ENCODE measurements at regions of chr7 and their contacts with region 1.

Region 1: DNA sequence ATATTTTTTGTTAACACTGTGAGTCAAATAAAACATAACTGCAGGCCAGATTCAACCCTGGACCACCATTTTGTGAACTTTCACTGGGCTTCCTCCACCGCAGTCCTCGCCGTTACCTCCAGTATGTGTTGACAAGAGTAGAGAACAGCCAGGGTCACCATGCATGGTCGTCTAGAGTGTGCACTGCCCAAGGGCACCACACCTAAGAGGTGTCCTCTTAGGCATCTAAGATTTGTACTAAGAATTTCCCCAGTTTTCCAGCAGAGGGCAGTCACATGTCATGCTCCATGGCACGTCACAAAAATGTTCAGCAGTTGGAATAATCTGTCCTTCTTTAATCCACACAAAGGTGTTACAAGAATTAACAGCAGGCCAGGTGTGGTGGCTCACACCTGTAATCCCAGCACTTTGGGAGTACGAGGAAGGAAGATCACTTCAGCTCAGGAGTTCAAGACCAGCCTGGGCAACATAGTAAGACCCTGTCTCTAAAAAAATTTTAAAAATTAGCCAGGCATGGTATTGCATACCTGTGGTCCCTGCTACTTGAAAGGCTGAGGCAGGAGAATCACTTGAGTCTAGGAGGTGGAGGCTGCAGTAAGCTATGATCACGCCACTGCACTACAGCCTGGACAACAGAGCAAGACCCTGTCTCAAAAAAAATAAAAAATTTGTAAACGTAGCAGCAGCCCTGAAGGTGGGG is 71.2 kb upstream of the FOXK1 start:
- DNase-seq: peak; percentile 35 to 48
- H3K4me3 ChIP-seq: no peak overlapping the region
- H3K27ac ChIP-seq: no peak overlapping the region
- H3K4me1 ChIP-seq: peaks cover 0 to 14% of the 10 kb centered on the region in 2 donors
- H3K27me3 ChIP-seq: no peaks in the 10 kb centered on the region
- CTCF ChIP-seq: peak; percentile 57 to 90 (median 79)
- POLR2A ChIP-seq: no peak

Region 2: DNA sequence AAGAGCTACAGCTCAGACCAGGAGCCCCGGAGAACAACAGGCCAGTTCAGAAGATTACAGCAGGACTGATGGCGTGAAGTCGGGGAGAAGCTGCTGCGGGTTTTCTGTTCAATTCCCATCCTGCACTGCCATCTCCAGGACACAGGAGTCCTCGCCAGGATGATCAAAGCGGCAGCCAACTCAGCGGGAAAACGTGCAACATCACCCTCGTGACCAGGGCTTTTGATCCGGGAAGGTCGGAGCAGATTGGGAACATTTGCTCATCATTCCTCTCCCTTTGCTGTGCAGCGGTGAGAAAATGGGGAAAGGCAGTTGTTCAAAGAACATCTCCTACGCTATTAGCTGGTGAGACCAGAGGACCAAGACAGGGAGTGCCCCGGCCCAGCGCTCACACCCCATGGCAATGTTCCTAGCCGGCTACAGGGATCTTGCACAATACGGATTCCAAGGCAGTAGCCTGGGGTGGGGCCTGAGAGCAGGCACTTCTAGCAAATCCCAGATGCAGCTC is 20.8 kb after region 1 on chr7:
- intact Hi-C with region 1: loop called (anchors 2 kb)
- DNase-seq: peak; percentile 69 to 73
- H3K4me3 ChIP-seq: no peak overlapping the region
- H3K27ac ChIP-seq: no peak overlapping the region
- H3K4me1 ChIP-seq: peaks cover 0 to 12% of the 10 kb centered on the region in 2 donors
- H3K27me3 ChIP-seq: no peaks in the 10 kb centered on the region
- CTCF ChIP-seq: peak in 4 of 6 experiments; percentile 37 to 58 (median 45)
- POLR2A ChIP-seq: no peak

Region 3: GRCh38 chr7:4753711-4754432 is 143.0 kb after region 1 on chr7:
- intact Hi-C with region 1: no loop called
- DNase-seq: peak; percentile 75 to 83
- H3K4me3 ChIP-seq: no peak overlapping the region
- H3K27ac ChIP-seq: no peak overlapping the region
- H3K4me1 ChIP-seq: peaks cover 0 to 6% of the 10 kb centered on the region in 2 donors
- H3K27me3 ChIP-seq: no peaks in the 10 kb centered on the region
- CTCF ChIP-seq: peak; percentile 67 to 93 (median 87)
- POLR2A ChIP-seq: no peak

Measured in thyroid gland (tissue), 4 donors.